Sigmoid colon (tissue), 7 donors: ENCODE measurements at regions of chr18 and their contacts with region 1.

Region 1: GRCh38 chr18:48929941-48930713 is 20.6 kb downstream of the SMAD7 start:
- DNase-seq: peak; percentile 84
- H3K4me3 ChIP-seq: peak overlapping the region in 3 of 4 donors; percentile 18 to 22 (median 19)
- H3K27ac ChIP-seq: peak overlapping the region; percentile 87 to 96 (median 90)
- H3K4me1 ChIP-seq: peaks cover 0 to 98% (median 97%) of the 10 kb centered on the region in 4 donors
- H3K27me3 ChIP-seq: no peaks in the 10 kb centered on the region
- CTCF ChIP-seq: no peak
- EP300 ChIP-seq: no peak
- POLR2A ChIP-seq: peak in 1 of 2 donors; percentile 22

Region 2: DNA sequence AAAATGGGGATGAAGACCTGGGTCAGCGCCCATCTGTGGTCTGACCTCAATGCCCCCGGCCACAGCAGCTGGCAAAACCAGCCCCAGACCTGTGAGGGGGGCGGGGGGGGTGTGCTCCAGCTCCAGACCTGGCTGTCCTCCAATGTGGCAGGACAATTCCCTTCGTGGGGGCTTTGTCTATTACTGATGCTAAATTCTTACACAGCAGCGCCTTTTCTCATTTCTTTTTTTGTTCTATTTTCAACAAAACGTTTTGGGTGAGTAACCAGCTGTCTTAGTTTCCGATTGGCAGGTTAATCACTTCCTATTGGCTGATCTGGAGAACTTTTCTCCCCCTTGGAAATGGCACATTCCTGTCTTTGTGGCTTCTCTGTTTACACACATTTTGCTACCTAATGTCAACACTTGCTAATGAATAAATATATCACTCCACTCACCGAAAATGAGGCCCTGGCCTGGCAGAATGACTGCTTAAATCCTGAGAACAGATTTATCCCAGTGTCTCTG is 16.3 kb after region 1 on chr18:
- intact Hi-C with region 1: loop called (anchors 2 kb)
- DNase-seq: no peak
- H3K4me3 ChIP-seq: peak overlapping the region; percentile 50 to 96 (median 93)
- H3K27ac ChIP-seq: peak overlapping the region; percentile 93 to 99 (median 97)
- H3K4me1 ChIP-seq: peaks cover 0 to 75% (median 62%) of the 10 kb centered on the region in 4 donors
- H3K27me3 ChIP-seq: no peaks in the 10 kb centered on the region
- CTCF ChIP-seq: no peak
- EP300 ChIP-seq: no peak
- POLR2A ChIP-seq: no peak

Region 3: GRCh38 chr18:48962994-48963561 is 33.0 kb after region 1 on chr18:
- intact Hi-C with region 1: no loop called
- DNase-seq: no peak
- H3K4me3 ChIP-seq: no peak overlapping the region
- H3K27ac ChIP-seq: peak overlapping the region; percentile 16 to 72 (median 36)
- H3K4me1 ChIP-seq: peaks cover 0 to 21% (median 10%) of the 10 kb centered on the region in 4 donors
- H3K27me3 ChIP-seq: no peaks in the 10 kb centered on the region
- CTCF ChIP-seq: no peak
- EP300 ChIP-seq: no peak
- POLR2A ChIP-seq: no peak